Left cardiac atrium (tissue), 4 donors: ENCODE measurements at regions of chr6 and their contacts with region 1.

Region 1: GRCh38 chr6:13336553-13336952 is 8.2 kb upstream of the TBC1D7 start:
- DNase-seq: peak; percentile 77
- ATAC-seq: peak; percentile 74 to 77

Region 2: DNA sequence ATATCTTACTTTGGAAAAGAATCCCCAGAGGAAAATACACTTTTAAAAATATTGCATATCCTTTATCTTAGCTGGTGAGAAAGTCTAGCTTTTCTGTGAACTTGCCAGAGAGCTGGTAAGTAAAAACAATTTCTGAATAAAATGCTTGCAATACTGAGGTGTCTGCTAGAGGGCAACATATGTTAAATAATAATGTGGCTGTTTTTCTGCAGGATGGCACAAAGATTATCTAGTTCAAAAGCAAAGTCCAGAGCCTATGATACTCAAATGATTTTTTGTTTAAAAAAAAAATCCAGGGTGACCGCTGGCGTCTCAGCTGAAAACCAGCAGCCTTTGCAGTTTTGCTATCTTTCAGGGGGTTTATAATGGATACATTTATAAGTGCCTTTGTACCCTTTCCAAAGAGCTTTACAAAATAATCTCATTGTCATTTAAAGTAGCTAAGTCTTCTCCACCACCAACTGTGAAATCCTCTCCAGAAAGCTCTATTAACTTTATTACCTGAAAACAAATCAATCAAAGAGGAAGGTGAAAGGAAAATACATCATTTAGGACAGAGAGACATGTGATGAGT is 425.1 kb before region 1 on chr6:
- intact Hi-C with region 1: loop called in 1 of 2 experiments (anchors 5 kb)
- DNase-seq: no peak
- ATAC-seq: no peak

Region 3: DNA sequence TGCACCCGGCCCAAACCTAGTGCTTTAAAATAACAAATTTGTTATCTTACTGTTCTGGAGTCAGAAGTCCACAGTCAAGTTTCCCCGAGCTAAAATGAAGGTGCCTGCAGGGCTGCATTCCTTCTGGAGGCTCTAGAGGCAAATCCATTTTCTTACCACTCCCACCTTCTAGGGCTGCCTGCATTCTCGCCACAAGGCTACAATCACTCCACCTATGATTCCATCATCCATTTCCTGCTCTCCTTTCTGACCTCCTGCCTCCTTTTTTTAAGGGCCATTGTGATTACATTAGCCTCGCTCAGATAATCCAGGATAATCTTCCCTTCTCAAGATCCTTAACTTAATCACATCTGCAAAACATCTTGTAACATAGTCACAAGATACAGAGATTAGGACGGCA is 195.4 kb after region 1 on chr6:
- intact Hi-C with region 1: loop called in 1 of 2 experiments (anchors 5 kb)
- DNase-seq: no peak
- ATAC-seq: no peak

Region 4: GRCh38 chr6:13538084-13538483 is 201.5 kb after region 1 on chr6:
- intact Hi-C with region 1: loop called (anchors 2 to 5 kb)
- DNase-seq: no peak
- ATAC-seq: peak; percentile 59 to 62

Region 5: GRCh38 chr6:14305624-14306023 is 969.1 kb after region 1 on chr6:
- intact Hi-C with region 1: no loop called
- DNase-seq: no peak
- ATAC-seq: peak in 1 of 2 donors; percentile 54